ENCODE measurements at regions of chr5 and their contacts with region 1.

Region 1: DNA sequence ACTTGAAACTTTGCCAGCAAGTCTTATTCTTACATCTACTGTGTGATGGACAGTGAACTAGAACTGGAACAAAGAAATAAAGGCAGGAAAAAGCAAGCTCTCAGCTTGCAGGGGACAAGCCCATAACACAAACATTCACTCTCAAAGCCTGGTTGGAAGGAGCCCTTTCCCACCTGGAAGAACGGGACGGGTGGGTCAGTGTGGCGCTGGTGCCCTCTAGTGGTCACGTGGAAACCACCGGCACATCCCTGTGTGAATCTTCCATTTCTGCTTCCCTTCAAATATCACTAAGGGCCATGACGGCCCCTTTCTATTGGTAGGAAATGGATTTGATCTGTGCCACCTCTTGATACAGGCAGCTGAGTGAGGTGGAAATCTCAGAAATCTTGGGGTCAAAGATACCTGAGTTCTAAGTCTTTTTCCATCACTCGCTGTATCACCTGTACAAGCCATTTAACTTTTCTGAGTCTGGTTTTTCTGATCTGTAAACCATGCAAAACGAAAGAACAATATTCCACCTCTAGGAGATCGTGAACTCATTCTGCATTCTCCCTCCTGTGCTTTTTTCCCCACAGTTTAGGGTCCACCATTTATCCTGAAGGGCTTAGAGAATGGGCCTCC is 211.6 kb downstream of the MSX2 start:
- DNase-seq: no peak
- H3K4me3 ChIP-seq: no peak overlapping the region
- H3K27ac ChIP-seq: no peak overlapping the region
- H3K4me1 ChIP-seq: no peaks in the 10 kb centered on the region
- H3K27me3 ChIP-seq: peaks cover 4% of the 10 kb centered on the region
- CTCF ChIP-seq: peak; percentile 26 to 82 (median 79)

Region 2: DNA sequence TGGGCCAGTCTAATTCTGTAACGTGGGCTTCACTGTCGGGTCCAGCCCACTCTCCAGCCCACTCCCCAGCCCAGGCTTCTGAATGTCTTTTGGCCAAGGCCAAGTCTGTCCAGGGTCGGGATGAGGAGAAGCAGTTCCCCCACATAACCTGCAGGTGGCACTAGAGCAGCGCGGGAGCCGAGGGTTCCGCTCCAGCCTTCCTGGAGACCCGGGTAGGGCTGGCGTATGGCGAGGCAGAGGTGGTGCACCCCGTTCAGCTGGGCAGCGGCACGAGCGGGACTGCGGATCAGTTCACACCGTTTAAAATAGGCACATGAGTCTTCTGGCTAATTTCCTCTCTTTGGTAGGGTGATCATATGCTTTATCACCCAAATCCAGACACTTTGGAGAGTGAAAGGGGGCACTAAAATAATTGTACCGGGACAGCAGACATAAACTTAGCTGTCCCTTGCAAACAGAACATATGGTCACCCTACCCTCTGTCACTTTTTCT is 25.7 kb before region 1 on chr5:
- intact Hi-C with region 1: loop called (anchors 2 kb)
- DNase-seq: peak in 1 of 2 donors; percentile 71
- H3K4me3 ChIP-seq: peak overlapping the region in 1 of 2 donors; percentile 22
- H3K27ac ChIP-seq: no peak overlapping the region
- H3K4me1 ChIP-seq: no peaks in the 10 kb centered on the region
- H3K27me3 ChIP-seq: no peaks in the 10 kb centered on the region
- CTCF ChIP-seq: peak; percentile 40 to 89 (median 89)